PC-9 (cell line): ENCODE measurements at regions of chr22 and their contacts with region 1.

Region 1: GRCh38 chr22:35627264-35628041 is 10.3 kb upstream of the MB start:
- DNase-seq: peak; percentile 94 to 98
- H3K4me3 ChIP-seq: peak overlapping the region; percentile 49; the same call in 1 of the 2 replicates
- H3K27ac ChIP-seq: peak overlapping the region; percentile 98
- H3K4me1 ChIP-seq: peaks cover 51% of the 10 kb centered on the region
- H3K27me3 ChIP-seq: no peaks in the 10 kb centered on the region
- CTCF ChIP-seq: peak; percentile 67

Region 2: DNA sequence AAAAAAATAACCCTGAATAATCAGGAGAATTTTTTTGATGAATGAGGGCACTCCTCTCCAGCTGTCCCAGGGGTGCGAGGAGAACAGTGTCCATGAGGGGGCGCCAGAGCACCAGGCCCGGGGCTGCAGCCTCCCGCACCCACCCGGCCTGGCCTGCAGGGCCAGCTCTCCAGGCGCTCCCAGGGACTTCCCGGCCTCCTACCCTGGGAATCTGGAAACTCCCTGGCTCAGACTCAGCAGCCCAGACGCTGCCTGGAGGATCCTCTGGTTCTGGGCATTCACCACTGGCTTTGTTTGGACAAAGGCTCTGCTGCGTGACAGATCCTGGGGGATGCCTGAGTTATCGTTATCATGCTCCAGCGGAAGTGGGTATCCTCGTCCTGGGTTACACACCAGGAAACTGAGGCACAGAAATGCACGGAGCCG is 196.5 kb before region 1 on chr22:
- CTCF ChIA-PET with region 1: interaction called, 11 read pairs
- POLR2A ChIA-PET with region 1: interaction called, 13 read pairs
- intact Hi-C with region 1: loop called (anchors 1 kb)
- DNase-seq: peak; percentile 75 to 93
- H3K4me3 ChIP-seq: no peak overlapping the region
- H3K27ac ChIP-seq: no peak overlapping the region
- H3K4me1 ChIP-seq: peaks cover 24% of the 10 kb centered on the region
- H3K27me3 ChIP-seq: no peaks in the 10 kb centered on the region
- CTCF ChIP-seq: peak; percentile 98

Region 3: DNA sequence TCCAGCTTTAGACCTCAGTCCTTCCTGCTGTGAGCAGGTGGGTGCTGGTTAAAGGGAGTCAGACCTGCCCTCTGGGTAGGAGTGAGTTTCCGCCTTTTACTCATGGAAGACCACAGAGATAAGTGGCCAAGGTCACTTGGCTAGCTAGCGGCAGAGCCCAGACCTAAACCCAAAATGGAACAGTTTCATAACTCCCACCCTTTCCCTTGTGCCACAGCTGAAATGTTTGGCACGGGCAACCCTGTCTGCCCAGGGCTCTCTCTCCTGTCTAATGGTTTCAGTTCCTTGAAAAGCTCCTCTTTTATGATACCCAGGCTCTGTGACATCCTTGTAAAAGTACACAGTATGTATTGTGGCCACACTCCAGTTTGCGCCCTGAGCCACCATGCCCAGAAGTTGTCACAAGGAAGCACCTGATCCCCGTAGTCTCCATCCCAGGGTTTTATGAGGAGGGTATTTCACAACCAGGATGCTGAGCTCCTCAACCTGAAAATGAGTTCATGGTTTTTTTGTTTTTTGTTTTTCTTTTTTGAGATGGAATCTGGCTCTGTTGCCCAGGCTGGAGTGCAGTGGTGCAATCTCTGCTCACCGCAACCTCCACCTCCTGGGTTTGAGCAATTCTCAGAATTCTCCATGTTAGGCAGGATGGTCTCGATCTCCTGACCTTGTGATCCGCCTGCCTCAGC is 15.4 kb before region 1 on chr22:
- CTCF ChIA-PET with region 1: no interaction called
- POLR2A ChIA-PET with region 1: no interaction called
- intact Hi-C with region 1: no loop called
- DNase-seq: peak in 1 of 2 experiments; percentile 92
- H3K4me3 ChIP-seq: no peak overlapping the region
- H3K27ac ChIP-seq: peak overlapping the region; percentile 79
- H3K4me1 ChIP-seq: peaks cover 38% of the 10 kb centered on the region
- H3K27me3 ChIP-seq: no peaks in the 10 kb centered on the region
- CTCF ChIP-seq: no peak

Region 4: DNA sequence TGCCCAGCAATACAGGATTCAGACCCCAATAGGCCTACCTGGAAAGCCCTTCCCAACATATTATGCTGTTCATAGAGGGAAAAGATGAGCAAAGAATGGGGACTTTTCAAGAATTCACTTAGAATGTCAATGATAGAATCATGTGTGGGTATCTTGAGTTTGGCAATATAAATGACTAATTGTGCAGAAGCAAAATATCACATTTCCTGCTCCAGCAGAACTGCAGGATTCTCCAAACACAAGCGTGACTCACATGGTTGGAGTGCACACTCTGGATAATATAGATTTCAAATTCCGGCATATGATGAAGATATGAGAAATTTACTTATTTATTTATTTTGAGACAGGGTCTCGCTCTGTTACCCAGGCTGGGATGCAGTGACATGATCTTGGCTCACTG is 77.7 kb after region 1 on chr22:
- CTCF ChIA-PET with region 1: no interaction called
- POLR2A ChIA-PET with region 1: interaction called, 25 read pairs
- intact Hi-C with region 1: no loop called
- DNase-seq: peak; percentile 19 to 88
- H3K4me3 ChIP-seq: no peak overlapping the region
- H3K27ac ChIP-seq: peak overlapping the region; percentile 55
- H3K4me1 ChIP-seq: peaks cover 15% of the 10 kb centered on the region
- H3K27me3 ChIP-seq: no peaks in the 10 kb centered on the region
- CTCF ChIP-seq: no peak

Region 5: DNA sequence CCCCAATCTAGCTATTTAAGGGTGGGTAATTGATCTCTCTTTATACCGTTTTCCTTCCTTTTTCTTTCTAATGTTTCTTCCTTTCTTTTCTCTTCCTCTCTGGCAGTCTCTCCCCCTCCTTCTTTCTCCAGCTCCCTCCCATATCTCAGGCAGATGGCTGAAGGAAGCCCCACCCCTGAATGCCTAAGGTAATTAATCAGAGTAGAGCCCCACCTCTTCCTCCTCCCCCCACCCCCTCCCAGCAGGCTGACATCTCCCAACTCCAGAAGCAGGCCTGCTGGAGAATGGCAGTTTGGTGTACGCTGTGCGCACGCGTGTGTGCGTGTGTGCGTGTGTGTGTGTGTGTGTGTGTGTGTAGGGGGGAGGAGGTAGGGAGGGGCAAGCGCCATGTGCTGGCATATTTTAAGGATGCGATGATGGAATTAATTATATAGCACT is 212.9 kb after region 1 on chr22:
- CTCF ChIA-PET with region 1: interaction called, 3 read pairs
- POLR2A ChIA-PET with region 1: interaction called, 8 read pairs
- intact Hi-C with region 1: loop called (anchors 1 kb)
- DNase-seq: peak; percentile 71 to 91
- H3K4me3 ChIP-seq: peak overlapping the region; percentile 69
- H3K27ac ChIP-seq: peak overlapping the region; percentile 85
- H3K4me1 ChIP-seq: peaks cover 62% of the 10 kb centered on the region
- H3K27me3 ChIP-seq: no peaks in the 10 kb centered on the region
- CTCF ChIP-seq: no peak

Region 6: GRCh38 chr22:35921777-35922176 is 294.3 kb after region 1 on chr22:
- CTCF ChIA-PET with region 1: interaction called, 3 read pairs
- POLR2A ChIA-PET with region 1: interaction called, 3 read pairs
- intact Hi-C with region 1: loop called (anchors 1 kb)
- DNase-seq: peak; percentile 77 to 86
- H3K4me3 ChIP-seq: no peak overlapping the region
- H3K27ac ChIP-seq: peak overlapping the region; percentile 71
- H3K4me1 ChIP-seq: peaks cover 30% of the 10 kb centered on the region
- H3K27me3 ChIP-seq: no peaks in the 10 kb centered on the region
- CTCF ChIP-seq: peak; percentile 72

Region 7: DNA sequence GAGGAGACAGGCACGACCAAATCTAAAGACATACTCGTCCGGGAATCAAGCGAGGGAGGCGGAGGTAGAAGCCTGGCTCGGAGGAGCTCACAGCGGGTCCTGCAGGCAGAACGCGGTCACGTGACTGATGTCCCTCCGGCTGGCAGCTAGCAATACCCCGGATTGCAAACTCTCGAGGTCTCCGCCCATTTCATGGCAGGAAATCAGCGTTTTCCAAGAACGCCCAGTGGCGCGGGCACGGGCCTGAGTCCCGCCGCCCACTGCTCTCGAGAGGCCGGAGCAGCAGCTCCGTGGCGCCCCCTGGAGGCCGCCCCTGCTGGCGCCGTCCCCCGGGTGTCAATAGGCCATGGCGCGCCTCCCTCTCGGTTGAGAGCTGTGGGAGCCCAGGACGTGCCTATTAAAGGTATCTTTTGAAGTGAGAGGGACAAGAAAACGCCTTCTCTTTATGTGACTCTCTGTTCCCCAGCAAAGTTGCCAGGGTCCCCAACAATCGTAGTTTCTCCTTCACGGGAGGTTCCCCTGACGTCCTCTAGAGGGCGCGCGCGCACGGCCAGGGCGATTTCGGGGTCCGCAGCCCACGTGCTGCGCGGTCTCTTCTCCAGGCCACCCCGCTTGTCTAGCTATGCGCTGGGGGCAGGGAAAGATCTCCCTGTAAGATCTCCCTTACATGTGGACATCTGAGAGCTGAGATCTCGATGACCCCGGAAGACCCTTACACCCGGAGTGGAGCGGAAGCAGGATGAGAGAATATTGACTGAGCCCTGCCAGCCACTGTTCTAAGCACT is 438.5 kb after region 1 on chr22:
- CTCF ChIA-PET with region 1: interaction called, 10 read pairs
- POLR2A ChIA-PET with region 1: interaction called, 9 read pairs
- intact Hi-C with region 1: loop called (anchors 1 kb)
- DNase-seq: peak; percentile 88 to 95
- H3K4me3 ChIP-seq: peak overlapping the region; percentile 76
- H3K27ac ChIP-seq: peak overlapping the region; percentile 71
- H3K4me1 ChIP-seq: peaks cover 12% of the 10 kb centered on the region
- H3K27me3 ChIP-seq: no peaks in the 10 kb centered on the region
- CTCF ChIP-seq: peak; percentile 100